Breast epithelium (tissue), 4 donors: ENCODE measurements at regions of chr14 and their contacts with region 1.

Region 1: DNA sequence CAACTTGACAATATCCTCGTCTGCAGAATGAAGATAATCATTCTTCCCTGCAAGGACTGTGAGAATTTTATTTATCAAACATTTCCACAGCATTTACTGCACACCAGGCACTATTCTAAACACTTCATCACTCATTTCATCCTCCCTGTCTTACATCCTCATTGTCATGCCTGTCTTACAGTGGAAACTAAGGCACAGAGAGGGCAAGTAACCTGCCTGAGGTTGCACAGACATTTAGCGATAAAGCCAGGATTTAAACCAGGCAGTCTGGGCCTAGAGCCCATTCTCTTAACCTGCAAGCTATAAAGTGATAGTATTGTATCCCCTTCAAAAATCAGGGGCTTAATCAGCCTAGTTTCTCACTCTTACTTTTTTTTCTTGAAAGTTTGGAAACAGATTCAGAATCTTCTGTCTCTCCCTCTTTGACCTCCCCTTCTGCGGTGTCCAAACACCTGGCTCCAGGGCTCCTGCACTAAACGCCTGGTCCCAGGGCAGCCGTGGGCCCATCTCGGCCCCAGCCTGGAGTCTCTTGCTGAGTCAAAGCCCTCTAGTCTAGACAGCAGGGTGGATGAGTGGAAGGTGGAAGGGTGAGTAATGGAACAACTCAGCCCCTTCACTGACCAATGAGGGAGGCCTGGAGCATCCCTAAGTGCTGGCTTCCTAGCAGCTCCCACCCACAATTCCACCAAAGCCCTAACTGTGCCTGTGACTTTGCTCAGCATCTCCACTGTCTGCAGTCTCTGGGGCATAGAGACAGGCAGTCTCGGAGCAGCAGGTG is 12.5 kb downstream of the ISM2 start:
- DNase-seq: no peak
- H3K4me3 ChIP-seq: no peak overlapping the region
- H3K27ac ChIP-seq: no peak overlapping the region
- H3K4me1 ChIP-seq: no peaks in the 10 kb centered on the region
- H3K27me3 ChIP-seq: no peaks in the 10 kb centered on the region
- CTCF ChIP-seq: no peak
- POLR2A ChIP-seq: no peak

Region 2: GRCh38 chr14:77554207-77554606 is 68.1 kb after region 1 on chr14:
- intact Hi-C with region 1: loop called (anchors 2 kb)
- DNase-seq: no peak
- H3K4me3 ChIP-seq: no peak overlapping the region
- H3K27ac ChIP-seq: no peak overlapping the region
- H3K4me1 ChIP-seq: no peaks in the 10 kb centered on the region
- H3K27me3 ChIP-seq: no peaks in the 10 kb centered on the region
- CTCF ChIP-seq: no peak
- POLR2A ChIP-seq: no peak